ENCODE measurements at regions of chr16 and their contacts with region 1.

Region 1: GRCh38 chr16:56681939-56682702 is at the start of gene MT1X:
- DNase-seq: peak; percentile 76
- ATAC-seq: peak; percentile 98
- H3K4me3 ChIP-seq: peak within 1 kb of the TSS; percentile 55 to 74 (median 59)
- H3K4me3 Mint-ChIP-seq: peak within 1 kb of the TSS; percentile 95
- H3K27ac ChIP-seq: peak within 1 kb of the TSS in 1 of 2 donors; percentile 55
- H3K27ac Mint-ChIP-seq: peak within 1 kb of the TSS; percentile 81
- H3K4me1 ChIP-seq: peaks cover 14 to 15% of the 10 kb centered on the region in 2 donors
- H3K4me1 Mint-ChIP-seq: peaks cover 21% of the 10 kb centered on the region
- H3K27me3 ChIP-seq: peaks cover 0 to 14% (median 4%) of the 10 kb centered on the region in 4 experiments
- H3K27me3 Mint-ChIP-seq: peaks cover 10% of the 10 kb centered on the region
- CTCF ChIP-seq: no peak
- total RNA-seq, gene MT1X: 13.0 and 17.2 TPM in 2 replicates

Region 2: DNA sequence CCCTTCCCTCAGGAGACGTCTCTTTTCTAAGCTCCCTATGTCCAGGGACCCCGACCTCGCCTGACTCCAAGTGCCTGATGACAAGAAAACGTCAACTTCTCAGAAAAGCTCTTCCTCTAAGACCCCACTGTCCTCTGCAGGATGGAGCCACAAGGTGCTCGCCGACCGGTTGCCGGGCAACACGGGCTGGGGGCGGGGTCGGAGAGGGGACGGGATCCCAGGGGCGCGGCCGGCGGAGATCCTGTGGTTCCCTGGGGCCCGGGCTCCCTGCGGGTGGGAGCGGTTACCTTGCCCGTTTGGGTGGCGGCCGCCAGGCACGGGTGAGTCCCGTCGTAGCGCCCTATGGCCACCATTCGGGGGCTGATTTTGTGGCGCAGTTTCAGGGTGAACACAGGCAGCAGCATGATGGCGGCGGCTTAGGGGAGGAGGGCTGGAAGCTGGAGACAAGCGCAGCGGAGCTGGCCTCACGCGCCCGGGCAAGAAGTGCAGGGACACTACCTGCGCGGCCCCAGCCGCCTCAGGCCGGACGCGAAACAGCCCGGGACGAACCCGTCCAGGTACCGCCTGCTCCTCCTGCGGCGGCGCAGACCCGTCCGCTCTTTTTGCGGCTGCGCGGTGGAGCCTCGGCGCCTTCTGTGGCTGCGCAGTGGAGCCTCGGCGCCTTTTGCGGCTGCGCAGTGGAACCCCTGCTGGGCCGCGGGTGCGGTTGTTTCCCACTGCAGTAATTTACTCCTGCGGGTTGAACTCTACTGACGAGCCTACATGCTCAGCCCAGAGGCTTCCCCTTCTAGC is 162.5 kb before region 1 on chr16 and contains the start of gene BBS2:
- CTCF ChIA-PET with region 1: no interaction called
- POLR2A ChIA-PET with region 1: no interaction called
- intact Hi-C with region 1: loop called (anchors 1 kb)
- DNase-seq: peak; percentile 94
- ATAC-seq: peak; percentile 90
- H3K4me3 ChIP-seq: peak within 1 kb of the TSS; percentile 64 to 97 (median 92)
- H3K4me3 Mint-ChIP-seq: peak within 1 kb of the TSS; percentile 90
- H3K27ac ChIP-seq: peak within 1 kb of the TSS; percentile 58 to 80
- H3K27ac Mint-ChIP-seq: peak within 1 kb of the TSS; percentile 89
- H3K4me1 ChIP-seq: peaks cover 9 to 18% of the 10 kb centered on the region in 2 donors
- H3K4me1 Mint-ChIP-seq: peaks cover 38% of the 10 kb centered on the region
- H3K27me3 ChIP-seq: no peaks in the 10 kb centered on the region
- H3K27me3 Mint-ChIP-seq: no peaks in the 10 kb centered on the region
- CTCF ChIP-seq: no peak
- total RNA-seq, gene BBS2: 63.4 and 69.6 TPM in 2 replicates

Region 3: DNA sequence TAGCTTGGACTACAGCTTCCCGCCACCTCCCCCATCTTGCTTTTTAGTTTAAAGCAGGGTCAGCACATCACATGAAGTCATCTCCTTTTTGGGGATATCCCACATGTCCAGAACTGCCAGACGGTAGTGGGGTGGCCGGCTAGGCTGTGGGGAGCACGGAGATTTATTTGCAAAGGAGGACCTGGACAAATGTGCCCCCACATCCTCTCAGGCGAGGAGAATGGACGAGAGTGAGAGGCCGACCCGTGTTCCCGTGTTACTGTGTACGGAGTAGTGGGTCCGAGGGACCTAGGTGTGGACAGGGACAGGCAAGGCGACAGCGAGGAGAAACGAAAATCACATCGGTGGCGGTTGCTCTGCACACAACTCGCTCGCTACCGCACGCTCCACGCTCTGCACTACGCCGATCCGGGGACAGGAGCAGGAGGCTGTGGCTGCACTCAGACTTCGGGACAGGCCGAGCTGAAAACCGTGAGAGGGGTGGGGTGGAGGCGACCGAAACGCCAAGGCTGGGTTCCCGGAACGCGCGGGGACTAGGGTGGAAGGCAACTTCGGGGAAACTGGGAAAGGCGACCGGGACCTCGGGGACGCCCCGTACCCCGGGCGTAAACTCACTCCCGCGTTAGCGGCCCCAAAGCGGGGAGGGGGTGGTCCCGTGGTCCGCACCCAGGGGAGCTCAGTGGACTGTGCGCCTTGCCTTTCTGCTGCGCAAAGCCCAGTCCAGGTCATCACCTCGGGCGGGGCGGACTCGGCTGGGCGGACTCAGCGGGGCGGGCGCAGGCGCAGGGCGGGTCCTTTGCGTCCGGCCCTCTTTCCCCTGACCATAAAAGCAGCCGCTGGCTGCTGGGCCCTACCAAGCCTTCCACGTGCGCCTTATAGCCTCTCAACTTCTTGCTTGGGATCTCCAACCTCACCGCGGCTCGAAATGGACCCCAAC is 44.0 kb before region 1 on chr16 and contains the start of gene MT1A:
- CTCF ChIA-PET with region 1: no interaction called
- POLR2A ChIA-PET with region 1: no interaction called
- intact Hi-C with region 1: loop called (anchors 10 kb)
- DNase-seq: peak; percentile 29
- ATAC-seq: no peak
- H3K4me3 ChIP-seq: no peak within 1 kb of the TSS
- H3K4me3 Mint-ChIP-seq: peak within 1 kb of the TSS; percentile 63
- H3K27ac ChIP-seq: no peak within 1 kb of the TSS
- H3K27ac Mint-ChIP-seq: no peak within 1 kb of the TSS
- H3K4me1 ChIP-seq: peaks cover 17 to 31% of the 10 kb centered on the region in 2 donors
- H3K4me1 Mint-ChIP-seq: peaks cover 24% of the 10 kb centered on the region
- H3K27me3 ChIP-seq: peaks cover 0 to 73% (median 36%) of the 10 kb centered on the region in 4 experiments
- H3K27me3 Mint-ChIP-seq: peaks cover 78% of the 10 kb centered on the region
- CTCF ChIP-seq: no peak
- total RNA-seq, gene MT1A: not detected in 2 replicates

Region 4: GRCh38 chr16:56657555-56658326 is 24.4 kb before region 1 on chr16 and contains the start of gene MT1F:
- CTCF ChIA-PET with region 1: interaction called, 4 read pairs
- POLR2A ChIA-PET with region 1: interaction called, 4 read pairs
- intact Hi-C with region 1: loop called (anchors 1 kb)
- DNase-seq: peak; percentile 71
- ATAC-seq: peak; percentile 74
- H3K4me3 ChIP-seq: peak within 1 kb of the TSS; percentile 26 to 79 (median 70)
- H3K4me3 Mint-ChIP-seq: peak within 1 kb of the TSS; percentile 99
- H3K27ac ChIP-seq: no peak within 1 kb of the TSS
- H3K27ac Mint-ChIP-seq: peak within 1 kb of the TSS; percentile 90
- H3K4me1 ChIP-seq: peaks cover 16 to 32% of the 10 kb centered on the region in 2 donors
- H3K4me1 Mint-ChIP-seq: peaks cover 29% of the 10 kb centered on the region
- H3K27me3 ChIP-seq: peaks cover 0 to 12% (median 4%) of the 10 kb centered on the region in 4 experiments
- H3K27me3 Mint-ChIP-seq: peaks cover 26% of the 10 kb centered on the region
- CTCF ChIP-seq: no peak
- total RNA-seq, gene MT1F: 4.3 and 7.6 TPM in 2 replicates

Region 5: GRCh38 chr16:56729735-56730662 is 47.9 kb after region 1 on chr16 and contains the start of gene NUP93:
- CTCF ChIA-PET with region 1: no interaction called
- POLR2A ChIA-PET with region 1: no interaction called
- intact Hi-C with region 1: loop called (anchors 1 kb)
- DNase-seq: peak; percentile 93
- ATAC-seq: peak; percentile 97
- H3K4me3 ChIP-seq: peak within 1 kb of the TSS; percentile 76 to 92 (median 88)
- H3K4me3 Mint-ChIP-seq: peak within 1 kb of the TSS; percentile 93
- H3K27ac ChIP-seq: peak within 1 kb of the TSS; percentile 64 to 85
- H3K27ac Mint-ChIP-seq: peak within 1 kb of the TSS; percentile 80
- H3K4me1 ChIP-seq: peaks cover 32 to 38% of the 10 kb centered on the region in 2 donors
- H3K4me1 Mint-ChIP-seq: peaks cover 25% of the 10 kb centered on the region
- H3K27me3 ChIP-seq: no peaks in the 10 kb centered on the region
- H3K27me3 Mint-ChIP-seq: no peaks in the 10 kb centered on the region
- CTCF ChIP-seq: no peak
- total RNA-seq, gene NUP93: 64.6 and 67.1 TPM in 2 replicates

Measured in B cell (primary cell).